CD4-positive, alpha-beta T cell (primary cell): ENCODE measurements at regions of chr7 and their contacts with region 1.

Region 1: DNA sequence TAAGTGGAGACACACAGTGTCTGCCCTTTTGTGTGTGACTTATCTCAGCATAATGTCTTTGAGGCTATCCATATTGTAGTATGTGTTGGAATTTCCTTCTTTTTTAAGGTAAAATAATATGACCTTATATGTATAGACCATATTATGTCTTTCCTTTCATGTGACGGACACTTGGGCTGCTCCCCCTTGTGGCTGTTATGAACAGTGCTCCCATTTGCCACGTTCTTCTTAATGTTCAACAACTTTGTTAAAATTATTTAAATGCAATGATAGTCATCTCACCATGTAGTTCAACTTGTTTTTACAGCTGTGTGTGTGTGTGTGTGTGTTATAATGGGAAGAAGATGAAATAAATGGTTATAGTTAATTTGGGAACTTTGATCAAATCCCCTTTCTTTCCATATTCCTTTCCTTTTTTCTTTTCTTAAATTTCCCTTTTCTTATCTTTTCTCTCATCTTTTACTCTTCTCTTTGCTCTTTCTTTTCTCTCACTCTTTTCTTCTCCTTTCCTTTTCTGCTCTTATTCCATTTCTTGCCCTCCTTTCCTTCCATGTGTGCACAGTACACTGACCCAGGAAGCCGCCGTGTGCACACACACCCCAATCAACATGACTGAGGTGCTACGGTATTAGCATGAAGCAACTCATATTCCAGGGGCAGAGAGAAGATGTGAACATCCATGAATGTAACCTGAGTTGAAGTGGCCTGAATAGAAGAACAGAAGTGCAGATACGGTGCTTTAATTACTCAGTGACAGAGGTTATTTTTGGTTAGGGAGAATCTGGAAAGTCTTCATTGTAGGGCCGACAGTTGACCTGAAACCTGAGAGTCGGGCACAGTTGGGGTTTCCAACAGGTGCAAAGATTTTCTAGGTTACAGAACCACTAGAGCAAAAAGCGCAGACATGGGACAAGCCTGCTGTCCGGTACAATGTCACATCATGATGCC is 596.7 kb downstream of the SDK1 start:
- DNase-seq: peak; percentile 13 to 75 (median 32)
- ATAC-seq: peak; percentile 52
- H3K4me3 ChIP-seq: no peak overlapping the region
- H3K4me3 Mint-ChIP-seq: no peak overlapping the region
- H3K27ac ChIP-seq: no peak overlapping the region
- H3K27ac Mint-ChIP-seq: no peak overlapping the region
- H3K4me1 ChIP-seq: no peaks in the 10 kb centered on the region
- H3K4me1 Mint-ChIP-seq: no peaks in the 10 kb centered on the region
- H3K27me3 ChIP-seq: no peaks in the 10 kb centered on the region
- H3K27me3 Mint-ChIP-seq: no peaks in the 10 kb centered on the region
- CTCF ChIP-seq: peak; percentile 79

Region 2: DNA sequence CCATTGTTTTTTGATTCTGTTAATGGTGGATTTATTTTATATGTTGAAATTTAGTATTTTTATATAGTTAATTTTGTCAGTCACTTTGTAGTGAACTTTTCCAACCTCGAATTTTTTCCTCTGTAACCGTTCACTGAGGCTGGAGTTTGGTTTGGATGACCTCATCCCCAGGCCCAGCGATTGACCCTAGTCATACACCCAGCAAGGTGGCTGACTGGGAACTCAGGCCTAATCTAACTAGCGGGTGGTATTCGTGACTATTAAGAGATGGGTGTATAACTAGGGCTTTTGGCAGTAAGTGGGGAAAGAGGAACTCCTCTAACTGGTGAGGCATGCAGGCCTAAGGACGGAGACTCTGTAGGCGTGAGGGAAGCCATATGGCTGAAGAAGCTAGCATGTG is 421.1 kb before region 1 on chr7:
- CTCF ChIA-PET with region 1: no interaction called
- POLR2A ChIA-PET with region 1: no interaction called
- intact Hi-C with region 1: loop called in 1 of 2 experiments (anchors 10 kb)
- DNase-seq: no peak
- ATAC-seq: no peak
- H3K4me3 ChIP-seq: no peak overlapping the region
- H3K4me3 Mint-ChIP-seq: no peak overlapping the region
- H3K27ac ChIP-seq: no peak overlapping the region
- H3K27ac Mint-ChIP-seq: no peak overlapping the region
- H3K4me1 ChIP-seq: no peaks in the 10 kb centered on the region
- H3K4me1 Mint-ChIP-seq: peaks cover 6% of the 10 kb centered on the region
- H3K27me3 ChIP-seq: no peaks in the 10 kb centered on the region
- H3K27me3 Mint-ChIP-seq: no peaks in the 10 kb centered on the region
- CTCF ChIP-seq: no peak